GM12878 (cell line): ENCODE measurements at regions of chr16 and their contacts with region 1.

Region 1: DNA sequence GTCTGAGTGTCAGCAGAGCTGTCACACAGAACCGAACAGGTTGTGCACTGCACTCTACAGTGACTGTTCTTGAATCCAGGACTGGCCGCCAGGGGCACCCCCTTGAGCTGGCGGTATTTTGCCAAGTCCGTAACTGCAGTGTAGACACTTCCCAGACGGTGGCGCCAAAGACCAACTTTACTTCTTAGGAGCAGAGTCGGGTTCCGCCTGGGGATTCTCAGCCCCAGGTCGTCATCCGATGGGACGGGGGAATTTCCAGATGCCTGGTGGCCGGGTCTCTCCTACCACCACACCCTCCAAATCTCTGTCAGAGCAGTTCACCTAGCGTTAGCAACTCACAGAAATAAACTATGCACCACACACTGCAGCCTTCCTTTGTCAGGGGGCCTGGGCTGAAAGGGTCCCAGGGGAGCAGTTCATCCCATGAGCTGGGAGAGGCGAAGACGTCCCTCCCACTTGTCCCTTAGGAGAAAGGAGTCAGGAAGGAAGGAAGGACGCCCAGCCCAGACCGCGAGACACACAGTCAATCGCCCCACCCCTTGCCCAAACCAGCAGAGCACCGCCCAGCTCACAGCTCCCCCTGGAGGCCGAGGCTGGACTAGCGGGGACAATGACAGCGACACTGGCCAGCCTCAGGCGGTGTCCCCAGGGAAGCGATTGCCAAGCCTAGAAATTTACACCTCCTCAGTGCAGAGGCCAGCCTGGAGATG is 7.4 kb upstream of the RIPOR1 start:
- DNase-seq: peak; percentile 87
- ATAC-seq: peak; percentile 86
- H3K4me3 ChIP-seq: peak overlapping the region; percentile 70; the same call in 1 of the 2 replicates
- H3K27ac ChIP-seq: peak overlapping the region; percentile 98
- H3K4me1 ChIP-seq: peaks cover 27% of the 10 kb centered on the region
- H3K27me3 ChIP-seq: no peaks in the 10 kb centered on the region
- CTCF ChIP-seq: peak; percentile 91 to 100 (median 99); a peak in 5 of 6 replicates
- EP300 ChIP-seq: no peak
- POLR2A ChIP-seq: peak; percentile 56
- RAD21 ChIP-seq: peak; percentile 83

Region 2: GRCh38 chr16:66814734-66815133 is 706.5 kb before region 1 on chr16:
- CTCF ChIA-PET with region 1: no interaction called
- POLR2A ChIA-PET with region 1: no interaction called
- RAD21 ChIA-PET with region 1: no interaction called
- SMC1A ChIA-PET with region 1: no interaction called
- in situ Hi-C with region 1: no loop called
- intact Hi-C with region 1: no loop called
- DNase-seq: no peak
- ATAC-seq: no peak
- H3K4me3 ChIP-seq: no peak overlapping the region
- H3K27ac ChIP-seq: no peak overlapping the region
- H3K4me1 ChIP-seq: no peaks in the 10 kb centered on the region
- H3K27me3 ChIP-seq: no peaks in the 10 kb centered on the region
- CTCF ChIP-seq: no peak
- EP300 ChIP-seq: no peak
- POLR2A ChIP-seq: no peak
- RAD21 ChIP-seq: no peak

Region 3: DNA sequence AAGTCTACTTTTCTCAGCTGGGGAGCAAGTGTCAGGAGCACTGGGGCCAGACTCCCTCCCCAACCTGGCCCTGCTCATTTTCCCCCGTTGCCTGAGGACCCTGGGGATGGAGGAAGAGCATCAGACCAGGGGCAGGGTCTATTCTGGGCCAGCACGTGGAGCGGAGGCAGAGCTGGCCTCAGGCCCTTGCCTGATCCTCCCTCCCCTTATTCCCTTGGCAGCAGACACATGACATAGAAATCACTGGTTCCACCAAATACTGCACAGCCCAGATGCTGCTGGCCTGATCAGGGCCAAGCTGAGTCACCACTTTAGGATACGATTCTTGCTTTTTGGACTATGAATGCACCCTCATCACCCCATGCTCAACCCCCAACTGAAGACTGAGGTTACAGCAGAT is 22.1 kb before region 1 on chr16:
- CTCF ChIA-PET with region 1: interaction called, 453 read pairs
- POLR2A ChIA-PET with region 1: interaction called, 9 read pairs
- RAD21 ChIA-PET with region 1: interaction called, 172 read pairs
- SMC1A ChIA-PET with region 1: interaction called, 78 read pairs
- in situ Hi-C with region 1: no loop called
- intact Hi-C with region 1: no loop called
- DNase-seq: no peak
- ATAC-seq: no peak
- H3K4me3 ChIP-seq: no peak overlapping the region
- H3K27ac ChIP-seq: no peak overlapping the region
- H3K4me1 ChIP-seq: no peaks in the 10 kb centered on the region
- H3K27me3 ChIP-seq: no peaks in the 10 kb centered on the region
- CTCF ChIP-seq: no peak
- EP300 ChIP-seq: no peak
- POLR2A ChIP-seq: no peak
- RAD21 ChIP-seq: no peak

Region 4: DNA sequence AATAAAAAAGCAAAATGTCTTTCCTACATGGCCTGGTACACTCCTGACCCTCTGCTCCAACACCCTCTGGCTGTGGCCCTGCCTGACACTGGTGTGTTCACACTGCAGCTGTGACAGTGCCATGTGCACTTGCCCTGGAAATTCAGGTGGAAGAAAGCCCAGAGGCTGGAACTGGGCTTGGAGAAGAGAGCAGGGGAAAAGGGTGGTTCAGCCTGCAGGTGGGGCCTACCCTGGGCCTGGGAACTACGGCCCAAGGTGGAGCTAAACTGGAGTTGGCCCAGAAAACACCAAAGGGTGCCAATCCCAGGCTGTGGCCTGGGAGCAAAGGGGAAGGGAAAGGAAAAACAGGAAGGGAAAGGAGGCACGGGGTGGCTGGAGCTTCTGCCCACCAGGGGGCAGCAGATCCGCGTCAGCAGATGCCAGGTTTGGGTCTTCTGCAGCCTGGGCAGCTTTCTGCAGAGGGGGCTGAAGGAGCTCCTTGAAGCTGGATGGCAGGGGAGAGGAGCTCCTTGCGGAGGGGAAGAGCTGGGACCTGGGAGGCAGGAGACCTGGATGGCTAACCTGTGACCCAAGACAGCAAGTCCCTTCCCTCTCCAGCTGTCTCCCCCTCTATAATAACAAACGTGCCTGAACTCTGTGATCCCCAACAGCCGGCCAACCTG is 25.6 kb after region 1 on chr16:
- CTCF ChIA-PET with region 1: interaction called, 36 read pairs
- POLR2A ChIA-PET with region 1: interaction called, 10 read pairs
- RAD21 ChIA-PET with region 1: interaction called, 18 read pairs
- SMC1A ChIA-PET with region 1: interaction called, 10 read pairs
- in situ Hi-C with region 1: no loop called
- intact Hi-C with region 1: no loop called
- DNase-seq: no peak
- ATAC-seq: peak; percentile 74
- H3K4me3 ChIP-seq: no peak overlapping the region
- H3K27ac ChIP-seq: peak overlapping the region; percentile 87
- H3K4me1 ChIP-seq: peaks cover 28% of the 10 kb centered on the region
- H3K27me3 ChIP-seq: no peaks in the 10 kb centered on the region
- CTCF ChIP-seq: peak; percentile 98 to 99 (median 98); a peak in 5 of 6 replicates
- EP300 ChIP-seq: no peak
- POLR2A ChIP-seq: peak; percentile 18; the same call in 1 of the 2 replicates
- RAD21 ChIP-seq: peak; percentile 92

Region 5: GRCh38 chr16:67641779-67642708 is 120.8 kb after region 1 on chr16:
- CTCF ChIA-PET with region 1: interaction called, 88 read pairs
- POLR2A ChIA-PET with region 1: interaction called, 6 read pairs
- RAD21 ChIA-PET with region 1: interaction called, 30 read pairs
- SMC1A ChIA-PET with region 1: interaction called, 41 read pairs
- in situ Hi-C with region 1: no loop called
- intact Hi-C with region 1: loop called (anchors 1 kb)
- DNase-seq: no peak
- ATAC-seq: no peak
- H3K4me3 ChIP-seq: no peak overlapping the region
- H3K27ac ChIP-seq: no peak overlapping the region
- H3K4me1 ChIP-seq: peaks cover 11% of the 10 kb centered on the region; the same call in 1 of the 2 replicates
- H3K27me3 ChIP-seq: no peaks in the 10 kb centered on the region
- CTCF ChIP-seq: no peak
- EP300 ChIP-seq: no peak
- POLR2A ChIP-seq: no peak
- RAD21 ChIP-seq: no peak

Region 6: GRCh38 chr16:67672739-67673662 is 151.8 kb after region 1 on chr16:
- CTCF ChIA-PET with region 1: interaction called, 196 read pairs
- POLR2A ChIA-PET with region 1: interaction called, 5 read pairs
- RAD21 ChIA-PET with region 1: interaction called, 27 read pairs
- SMC1A ChIA-PET with region 1: interaction called, 20 read pairs
- in situ Hi-C with region 1: no loop called
- intact Hi-C with region 1: loop called (anchors 1 kb)
- DNase-seq: no peak
- ATAC-seq: peak; percentile 59
- H3K4me3 ChIP-seq: no peak overlapping the region
- H3K27ac ChIP-seq: no peak overlapping the region
- H3K4me1 ChIP-seq: peaks cover 24% of the 10 kb centered on the region
- H3K27me3 ChIP-seq: no peaks in the 10 kb centered on the region
- CTCF ChIP-seq: peak; percentile 83 to 94 (median 88)
- EP300 ChIP-seq: no peak
- POLR2A ChIP-seq: no peak
- RAD21 ChIP-seq: peak; percentile 94

Region 7: GRCh38 chr16:67857502-67858233 is 336.4 kb after region 1 on chr16:
- CTCF ChIA-PET with region 1: no interaction called
- POLR2A ChIA-PET with region 1: no interaction called
- RAD21 ChIA-PET with region 1: no interaction called
- SMC1A ChIA-PET with region 1: no interaction called
- in situ Hi-C with region 1: no loop called
- intact Hi-C with region 1: no loop called
- DNase-seq: no peak
- ATAC-seq: peak; percentile 73
- H3K4me3 ChIP-seq: no peak overlapping the region
- H3K27ac ChIP-seq: no peak overlapping the region
- H3K4me1 ChIP-seq: no peaks in the 10 kb centered on the region
- H3K27me3 ChIP-seq: no peaks in the 10 kb centered on the region
- CTCF ChIP-seq: no peak
- EP300 ChIP-seq: no peak
- POLR2A ChIP-seq: no peak
- RAD21 ChIP-seq: no peak

Region 8: DNA sequence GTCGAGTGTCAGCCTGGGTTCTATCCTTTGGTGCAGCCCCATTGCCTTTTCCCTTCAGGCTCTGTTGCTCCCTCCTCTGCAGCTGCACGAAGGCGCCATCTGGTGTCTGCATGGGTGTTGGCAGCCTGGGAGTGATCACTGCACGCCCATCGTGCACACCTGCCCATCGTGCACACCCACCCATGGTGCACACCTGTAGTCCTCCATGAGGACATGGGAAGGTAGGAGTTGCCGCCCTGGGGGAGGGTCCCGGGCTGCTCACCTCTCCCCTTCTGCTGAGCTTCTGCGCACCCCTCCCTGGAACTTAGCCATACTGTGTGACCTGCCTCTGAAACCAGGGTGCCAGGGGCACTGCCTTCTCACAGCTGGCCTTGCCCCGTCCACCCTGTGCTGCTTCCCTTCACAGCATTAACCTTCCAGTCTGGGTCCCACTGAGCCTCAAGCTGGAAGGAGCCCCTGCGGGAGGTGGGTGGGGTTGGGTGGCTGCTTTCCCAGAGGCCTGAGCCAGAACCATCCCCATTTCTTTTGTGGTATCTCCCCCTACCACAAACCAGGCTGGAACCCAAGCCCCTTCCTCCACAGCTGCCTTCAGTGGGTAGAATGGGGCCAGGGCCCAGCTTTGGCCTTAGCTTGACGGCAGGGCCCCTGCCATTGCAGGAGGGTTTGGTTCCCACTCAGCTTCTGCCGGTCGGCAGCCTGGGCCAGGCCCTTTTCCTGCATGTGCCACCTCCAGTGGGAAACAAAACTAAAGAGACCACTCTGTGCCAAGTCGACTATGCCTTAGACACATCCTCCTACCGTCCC is 407.5 kb after region 1 on chr16:
- CTCF ChIA-PET with region 1: interaction called, 4 read pairs
- POLR2A ChIA-PET with region 1: no interaction called
- RAD21 ChIA-PET with region 1: no interaction called
- SMC1A ChIA-PET with region 1: no interaction called
- in situ Hi-C with region 1: no loop called
- intact Hi-C with region 1: loop called (anchors 10 kb)
- DNase-seq: no peak
- ATAC-seq: peak; percentile 94
- H3K4me3 ChIP-seq: no peak overlapping the region
- H3K27ac ChIP-seq: no peak overlapping the region
- H3K4me1 ChIP-seq: no peaks in the 10 kb centered on the region; the same call in 1 of the 2 replicates
- H3K27me3 ChIP-seq: no peaks in the 10 kb centered on the region
- CTCF ChIP-seq: peak; percentile 93 to 98 (median 96)
- EP300 ChIP-seq: no peak
- POLR2A ChIP-seq: peak; percentile 77
- RAD21 ChIP-seq: peak; percentile 88